Activated naive CD4-positive, alpha-beta T cell treated with anti-CD3 and anti-CD28 coated beads for 36 hours (primary cell): ENCODE measurements at regions of chr6 and their contacts with region 1.

Region 1: DNA sequence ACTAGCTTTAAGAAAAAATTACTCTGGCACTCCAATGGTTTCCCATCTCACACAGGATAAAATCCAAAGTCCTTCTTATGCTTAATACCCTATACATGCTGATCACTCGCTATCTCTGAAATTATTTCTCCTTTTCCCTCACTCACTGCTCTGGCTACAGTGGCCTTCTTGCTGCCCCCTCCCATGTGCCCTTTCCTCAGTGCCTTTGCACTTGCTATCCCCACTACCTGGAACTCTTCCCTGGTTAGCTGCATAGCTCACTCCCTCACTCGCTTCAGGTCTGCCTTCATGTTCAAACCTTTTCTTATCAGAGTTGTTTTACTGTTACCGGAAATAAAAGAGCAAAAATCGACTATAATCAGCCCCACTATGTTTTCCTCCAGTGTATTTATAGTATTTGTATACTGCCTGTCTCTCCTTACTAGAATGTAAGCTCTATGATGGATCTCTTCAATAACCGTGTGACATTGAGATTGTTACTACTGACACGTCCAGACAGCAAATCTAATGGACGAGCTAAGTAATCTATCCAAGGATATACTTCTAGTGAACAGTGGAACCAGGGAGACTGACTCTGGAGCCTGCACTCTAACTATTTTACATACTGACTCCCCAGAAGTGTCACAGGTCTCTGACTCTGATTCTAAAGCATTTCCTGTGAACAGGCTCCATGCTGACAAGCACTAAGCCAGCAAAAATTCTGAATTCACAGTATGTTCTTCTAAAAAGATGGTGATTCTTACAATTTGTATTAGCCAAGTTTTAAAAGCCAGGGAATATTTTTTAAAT is 25.1 kb downstream of the FKBP5 start:
- DNase-seq: no peak
- H3K4me3 Mint-ChIP-seq: no peak overlapping the region
- H3K27ac Mint-ChIP-seq: no peak overlapping the region
- H3K4me1 Mint-ChIP-seq: peaks cover 30% of the 10 kb centered on the region
- H3K27me3 Mint-ChIP-seq: no peaks in the 10 kb centered on the region

Region 2: DNA sequence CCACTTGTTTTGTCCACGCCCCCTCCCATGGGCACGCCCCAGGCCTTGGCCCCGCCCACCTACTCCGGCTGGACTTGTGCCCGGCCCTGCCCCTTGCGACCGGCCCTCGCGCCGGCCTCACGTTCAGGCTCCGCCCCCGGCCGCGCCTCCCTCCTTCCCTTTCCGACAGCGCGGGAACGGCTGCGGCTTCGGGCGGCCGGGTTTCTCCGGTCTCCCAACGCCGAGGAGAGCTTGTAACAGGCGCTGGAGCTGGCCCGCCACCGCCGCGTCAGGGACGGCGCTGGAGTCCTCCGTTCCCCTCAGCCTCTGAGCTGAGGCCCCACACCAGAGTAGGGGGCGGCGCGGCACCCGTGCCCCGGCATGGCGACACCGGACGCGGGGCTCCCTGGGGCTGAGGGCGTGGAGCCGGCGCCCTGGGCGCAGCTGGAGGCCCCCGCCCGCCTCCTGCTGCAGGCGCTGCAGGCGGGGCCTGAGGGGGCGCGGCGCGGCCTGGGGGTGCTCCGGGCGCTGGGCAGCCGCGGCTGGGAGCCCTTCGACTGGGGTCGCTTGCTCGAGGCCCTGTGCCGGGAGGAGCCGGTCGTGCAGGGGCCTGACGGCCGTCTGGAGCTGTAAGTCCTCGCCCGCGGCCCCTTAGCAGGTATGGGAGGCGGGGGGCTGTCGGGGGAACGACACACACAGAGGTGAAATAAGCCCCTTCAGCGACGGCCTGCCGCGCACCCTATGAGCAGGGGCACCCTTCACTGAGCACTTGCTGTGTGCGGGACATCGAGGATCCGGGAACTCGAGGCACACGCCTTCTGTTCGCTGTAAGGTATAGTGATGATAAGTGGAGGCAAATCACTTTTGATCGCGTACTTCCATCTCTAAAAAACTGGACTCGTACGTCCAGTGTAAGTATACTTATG is 211.2 kb before region 1 on chr6 and contains the start of gene FANCE:
- CTCF ChIA-PET with region 1: no interaction called
- intact Hi-C with region 1: no loop called
- DNase-seq: peak; percentile 95
- H3K4me3 Mint-ChIP-seq: peak within 1 kb of the TSS; percentile 79
- H3K27ac Mint-ChIP-seq: no peak within 1 kb of the TSS
- H3K4me1 Mint-ChIP-seq: peaks cover 31% of the 10 kb centered on the region
- H3K27me3 Mint-ChIP-seq: no peaks in the 10 kb centered on the region
- total RNA-seq, gene FANCE: 16.3 TPM

Region 3: GRCh38 chr6:35725721-35726438 is 62.2 kb after region 1 on chr6:
- CTCF ChIA-PET with region 1: interaction called, 6 read pairs
- intact Hi-C with region 1: loop called (anchors 1 kb)
- DNase-seq: peak; percentile 52
- H3K4me3 Mint-ChIP-seq: peak overlapping the region; percentile 61
- H3K27ac Mint-ChIP-seq: peak overlapping the region; percentile 82
- H3K4me1 Mint-ChIP-seq: peaks cover 80% of the 10 kb centered on the region
- H3K27me3 Mint-ChIP-seq: no peaks in the 10 kb centered on the region